ENCODE measurements at regions of chr22 and their contacts with region 1.

Region 1: DNA sequence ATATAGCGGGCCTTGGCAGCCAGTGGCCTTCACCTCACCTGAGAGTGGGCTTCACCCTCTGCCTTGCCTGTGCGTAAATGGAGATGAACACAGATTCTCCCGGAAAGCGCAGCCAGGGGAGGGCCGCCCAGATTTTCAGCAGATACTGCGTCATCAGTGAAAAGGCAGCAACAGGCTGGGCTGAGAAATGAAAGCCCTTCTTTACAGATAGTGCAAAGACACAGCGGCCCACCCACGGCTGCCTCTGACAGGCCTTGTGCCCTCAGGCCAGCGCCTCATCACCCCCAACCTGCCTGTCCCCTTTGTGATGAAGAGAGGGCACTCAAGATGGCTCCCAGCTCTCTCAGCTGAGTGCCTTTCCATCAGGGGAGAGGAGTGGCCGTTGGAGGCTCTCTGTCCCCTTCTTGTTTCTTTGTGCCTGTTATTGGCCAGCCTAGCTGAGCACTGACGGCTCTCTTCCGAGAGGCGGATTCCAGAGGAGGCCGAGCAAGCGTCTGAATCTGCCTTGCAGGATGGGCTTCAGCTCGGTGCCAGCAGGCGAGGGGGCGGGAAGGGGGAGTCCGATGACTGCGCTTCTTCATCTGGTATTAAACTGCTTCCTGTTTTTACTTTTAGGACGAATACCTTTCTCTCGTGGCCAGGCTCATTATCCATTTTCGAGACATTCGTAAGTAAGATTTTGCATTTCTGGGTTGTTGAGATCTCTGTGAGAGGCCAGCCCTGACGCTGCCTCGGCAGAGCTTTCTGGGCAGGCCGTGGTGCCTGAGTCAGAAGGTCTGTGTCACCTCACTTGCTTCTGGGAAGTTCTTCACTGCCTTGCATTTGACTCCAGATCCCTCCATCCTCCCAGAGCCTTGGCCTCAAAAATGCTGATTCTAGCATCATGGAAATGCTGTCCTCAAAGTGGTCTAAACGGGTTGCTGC is 43.7 kb downstream of the MED15 start:
- DNase-seq: peak; percentile 21
- H3K4me3 Mint-ChIP-seq: peak overlapping the region; percentile 53
- H3K27ac Mint-ChIP-seq: peak overlapping the region; percentile 93
- H3K4me1 Mint-ChIP-seq: peaks cover 86% of the 10 kb centered on the region
- H3K27me3 Mint-ChIP-seq: no peaks in the 10 kb centered on the region

Region 2: DNA sequence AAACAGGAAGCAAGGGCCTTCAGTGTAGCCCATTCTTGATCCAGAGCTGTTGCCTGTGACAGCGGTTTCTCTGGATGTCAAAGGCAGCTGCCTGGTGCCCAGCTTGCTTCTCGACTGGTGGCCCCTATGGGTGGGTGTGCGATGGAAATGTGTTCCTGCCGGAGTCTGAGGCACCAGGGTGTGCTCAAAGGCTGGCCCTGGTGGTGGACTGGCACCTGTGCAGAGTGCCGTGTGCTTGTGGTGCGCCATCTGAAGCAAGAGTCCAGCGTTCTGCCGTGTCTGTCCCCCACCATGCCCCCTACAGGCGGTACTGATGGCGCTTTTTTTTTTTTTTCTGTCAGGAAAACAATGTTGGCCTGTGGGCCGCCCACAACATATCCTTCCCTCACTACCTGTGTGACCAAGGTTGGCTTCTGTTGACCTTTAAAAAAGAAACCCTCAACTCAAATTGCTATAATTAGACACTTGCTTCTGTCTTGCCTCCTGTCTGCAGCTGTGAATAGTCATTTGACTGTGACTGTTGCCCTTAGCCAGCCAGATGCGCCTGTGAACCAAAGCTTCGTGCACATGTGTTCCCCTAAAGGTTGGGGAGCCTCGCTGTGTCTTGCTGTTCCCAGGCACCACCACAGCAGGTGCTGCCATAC is 439.9 kb before region 1 on chr22:
- CTCF ChIA-PET with region 1: no interaction called
- POLR2A ChIA-PET with region 1: no interaction called
- DNase-seq: peak; percentile 28
- H3K4me3 Mint-ChIP-seq: no peak overlapping the region
- H3K27ac Mint-ChIP-seq: peak overlapping the region; percentile 76
- H3K4me1 Mint-ChIP-seq: peaks cover 28% of the 10 kb centered on the region
- H3K27me3 Mint-ChIP-seq: no peaks in the 10 kb centered on the region

Region 3: DNA sequence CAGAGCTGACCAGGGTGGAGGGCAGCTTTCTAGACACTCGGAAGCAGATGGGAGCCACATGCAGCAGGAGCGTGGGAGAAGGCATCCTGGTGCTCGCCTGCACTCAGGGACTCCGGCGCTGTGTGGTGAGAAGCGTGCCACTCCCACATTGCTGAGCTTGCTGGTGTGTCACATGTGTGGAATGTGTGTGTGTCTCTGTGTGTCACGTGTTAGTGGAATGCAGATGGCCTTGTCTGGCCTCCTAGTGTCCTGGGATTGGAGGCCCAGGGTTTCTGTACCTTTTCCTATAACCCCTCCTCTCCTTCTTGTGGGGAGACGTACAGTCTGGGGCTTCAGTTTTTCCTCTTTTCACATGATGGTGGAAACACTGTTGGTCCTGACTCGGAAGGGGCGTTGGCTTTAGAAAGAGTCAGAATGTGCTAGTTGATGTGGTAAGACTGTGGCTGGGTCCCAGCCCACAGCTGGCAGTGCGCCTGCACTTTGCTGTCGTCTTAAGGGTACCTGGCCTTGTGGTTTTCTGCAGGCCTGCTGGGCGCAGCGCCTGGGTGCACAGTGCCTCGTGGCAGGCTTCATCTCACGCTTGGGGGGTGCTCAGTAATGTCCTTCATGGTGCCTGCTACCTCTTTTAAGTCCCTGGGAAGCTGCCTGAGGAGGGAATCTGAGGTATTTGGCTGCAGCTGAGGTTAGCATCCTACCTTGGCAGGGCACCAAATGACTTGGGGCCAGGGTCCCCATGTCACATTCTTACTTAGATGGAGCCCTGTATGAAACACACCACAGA is 18.1 kb after region 1 on chr22:
- CTCF ChIA-PET with region 1: interaction called, 122 read pairs
- POLR2A ChIA-PET with region 1: no interaction called
- DNase-seq: peak; percentile 92
- H3K4me3 Mint-ChIP-seq: peak overlapping the region; percentile 60
- H3K27ac Mint-ChIP-seq: peak overlapping the region; percentile 93
- H3K4me1 Mint-ChIP-seq: peaks cover 80% of the 10 kb centered on the region
- H3K27me3 Mint-ChIP-seq: no peaks in the 10 kb centered on the region